Caco-2 (cell line): ENCODE measurements at regions of chr19 and their contacts with region 1.

Region 1: GRCh38 chr19:55632463-55632834 is 8.1 kb upstream of the ZNF784 start:
- DNase-seq: peak; percentile 93
- H3K4me3 ChIP-seq: no peak overlapping the region
- H3K4me3 Mint-ChIP-seq: peak overlapping the region; percentile 30
- H3K27ac Mint-ChIP-seq: peak overlapping the region; percentile 3
- H3K4me1 ChIP-seq: peaks cover 7% of the 10 kb centered on the region
- H3K4me1 Mint-ChIP-seq: peaks cover 30% of the 10 kb centered on the region
- H3K27me3 ChIP-seq: no peaks in the 10 kb centered on the region
- H3K27me3 Mint-ChIP-seq: no peaks in the 10 kb centered on the region
- CTCF ChIP-seq: peak; percentile 88

Region 2: GRCh38 chr19:55146078-55146704 is 486.3 kb before region 1 on chr19:
- CTCF ChIA-PET with region 1: interaction called, 3 read pairs
- POLR2A ChIA-PET with region 1: no interaction called
- intact Hi-C with region 1: loop called (anchors 2 kb)
- DNase-seq: peak; percentile 69 to 73
- H3K4me3 ChIP-seq: peak overlapping the region; percentile 43
- H3K4me3 Mint-ChIP-seq: peak overlapping the region; percentile 66
- H3K27ac Mint-ChIP-seq: no peak overlapping the region
- H3K4me1 ChIP-seq: peaks cover 12% of the 10 kb centered on the region; the same call in 1 of the 2 replicates
- H3K4me1 Mint-ChIP-seq: peaks cover 20% of the 10 kb centered on the region
- H3K27me3 ChIP-seq: no peaks in the 10 kb centered on the region
- H3K27me3 Mint-ChIP-seq: peaks cover 8% of the 10 kb centered on the region
- CTCF ChIP-seq: peak; percentile 79 to 94

Region 3: DNA sequence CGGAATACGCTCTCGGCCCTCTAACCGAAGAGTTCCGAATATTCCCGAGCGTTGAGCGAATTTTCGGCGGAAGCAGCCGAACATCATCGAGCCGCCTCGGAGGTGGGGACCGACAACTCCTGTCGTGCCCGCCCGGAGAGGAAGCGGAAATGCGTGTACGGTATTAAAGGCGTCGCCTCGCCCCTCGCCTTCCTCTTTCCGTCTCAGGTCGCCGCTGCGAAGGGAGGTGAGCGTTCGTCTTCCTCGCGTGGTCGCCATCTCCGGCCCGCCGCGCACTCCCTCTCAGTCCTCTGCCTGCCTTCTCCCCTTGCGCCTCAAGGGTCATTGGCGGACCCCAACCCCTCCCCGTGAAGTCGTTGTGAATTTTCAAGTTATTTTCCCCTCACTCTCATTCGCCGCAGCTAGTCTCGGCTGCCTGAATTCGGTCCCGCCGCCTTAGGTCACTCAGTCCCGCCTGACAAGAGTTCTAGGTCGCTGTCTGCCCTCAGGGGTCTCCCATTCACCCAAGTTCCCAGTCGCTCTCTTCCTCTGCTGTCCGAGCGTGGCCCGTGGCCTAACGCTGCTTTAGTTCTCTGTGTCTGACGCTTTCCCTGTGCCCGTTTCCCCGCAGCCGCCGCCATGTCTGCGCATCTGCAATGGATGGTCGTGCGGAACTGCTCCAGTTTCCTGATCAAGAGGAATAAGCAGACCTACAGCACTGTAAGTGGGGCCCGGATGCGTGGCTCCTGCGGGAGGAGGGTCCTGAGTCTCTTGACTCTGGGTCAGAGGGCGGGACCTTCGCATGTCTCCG is 246.5 kb before region 1 on chr19 and contains the start of gene RPL28:
- CTCF ChIA-PET with region 1: no interaction called
- POLR2A ChIA-PET with region 1: no interaction called
- intact Hi-C with region 1: loop called (anchors 10 kb)
- DNase-seq: peak; percentile 98 to 99
- H3K4me3 ChIP-seq: peak within 1 kb of the TSS; percentile 95
- H3K4me3 Mint-ChIP-seq: peak within 1 kb of the TSS; percentile 93
- H3K27ac Mint-ChIP-seq: peak within 1 kb of the TSS; percentile 89
- H3K4me1 ChIP-seq: peaks cover 30% of the 10 kb centered on the region
- H3K4me1 Mint-ChIP-seq: peaks cover 18% of the 10 kb centered on the region
- H3K27me3 ChIP-seq: no peaks in the 10 kb centered on the region
- H3K27me3 Mint-ChIP-seq: no peaks in the 10 kb centered on the region
- CTCF ChIP-seq: no peak
- total RNA-seq, gene RPL28: 2,048 and 2,146 TPM in 2 replicates

Region 4: DNA sequence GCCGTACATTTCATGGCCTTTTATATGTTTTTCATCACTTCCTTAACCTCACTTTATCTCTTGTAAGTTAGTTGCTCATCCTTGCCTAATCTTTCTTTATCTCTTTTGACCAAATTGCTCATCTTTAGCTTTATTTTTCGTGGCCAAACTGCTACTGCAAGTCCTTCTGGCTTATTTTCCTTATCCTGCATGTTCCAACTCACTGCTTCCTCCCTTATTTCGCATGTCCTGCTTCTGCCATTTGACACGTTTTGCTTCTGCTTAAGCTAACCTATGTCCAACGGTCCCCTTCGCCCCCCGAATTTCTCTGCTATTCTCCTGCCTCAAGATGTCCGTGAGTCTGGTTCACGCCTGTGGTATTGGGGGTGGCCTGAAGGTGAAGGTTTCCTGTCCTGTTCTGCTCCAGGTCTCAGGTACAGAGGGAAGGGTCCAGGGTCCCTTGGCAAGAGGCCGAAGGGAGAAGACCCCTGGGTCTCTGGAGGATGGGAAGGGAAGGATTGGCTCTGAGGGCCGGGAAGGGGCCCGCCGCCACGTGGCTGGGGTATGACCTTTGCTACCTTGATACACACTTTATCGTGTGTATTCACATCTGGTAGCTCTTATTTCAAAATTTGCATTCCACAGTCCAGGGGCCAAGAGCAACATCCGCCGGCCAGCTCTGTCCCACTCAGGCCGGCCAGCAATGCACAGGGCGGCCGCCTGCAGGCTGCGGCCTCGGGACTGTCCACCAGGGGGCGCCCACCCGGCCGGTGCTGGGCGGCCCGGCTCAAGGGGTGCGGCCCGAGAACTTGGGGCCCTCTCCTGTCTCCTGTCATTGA is 165.0 kb before region 1 on chr19:
- CTCF ChIA-PET with region 1: interaction called, 12 read pairs
- POLR2A ChIA-PET with region 1: no interaction called
- intact Hi-C with region 1: loop called (anchors 1 kb)
- DNase-seq: peak in 1 of 2 experiments; percentile 83
- H3K4me3 ChIP-seq: no peak overlapping the region
- H3K4me3 Mint-ChIP-seq: no peak overlapping the region
- H3K27ac Mint-ChIP-seq: no peak overlapping the region
- H3K4me1 ChIP-seq: no peaks in the 10 kb centered on the region
- H3K4me1 Mint-ChIP-seq: peaks cover 11% of the 10 kb centered on the region
- H3K27me3 ChIP-seq: no peaks in the 10 kb centered on the region
- H3K27me3 Mint-ChIP-seq: peaks cover 7% of the 10 kb centered on the region
- CTCF ChIP-seq: peak; percentile 82 to 97

Region 5: GRCh38 chr19:55516878-55517620 is 115.4 kb before region 1 on chr19:
- CTCF ChIA-PET with region 1: interaction called, 9 read pairs
- POLR2A ChIA-PET with region 1: interaction called, 3 read pairs
- intact Hi-C with region 1: loop called (anchors 1 kb)
- DNase-seq: peak; percentile 94 to 97
- H3K4me3 ChIP-seq: peak overlapping the region; percentile 31
- H3K4me3 Mint-ChIP-seq: peak overlapping the region; percentile 72
- H3K27ac Mint-ChIP-seq: peak overlapping the region; percentile 77
- H3K4me1 ChIP-seq: peaks cover 8% of the 10 kb centered on the region
- H3K4me1 Mint-ChIP-seq: no peaks in the 10 kb centered on the region
- H3K27me3 ChIP-seq: no peaks in the 10 kb centered on the region
- H3K27me3 Mint-ChIP-seq: peaks cover 5% of the 10 kb centered on the region
- CTCF ChIP-seq: peak; percentile 89 to 98

Region 6: GRCh38 chr19:55605207-55605636 is 27.2 kb before region 1 on chr19:
- CTCF ChIA-PET with region 1: interaction called, 8 read pairs
- POLR2A ChIA-PET with region 1: no interaction called
- intact Hi-C with region 1: loop called (anchors 1 kb)
- DNase-seq: peak; percentile 99
- H3K4me3 ChIP-seq: peak overlapping the region; percentile 87
- H3K4me3 Mint-ChIP-seq: peak overlapping the region; percentile 86
- H3K27ac Mint-ChIP-seq: peak overlapping the region; percentile 80
- H3K4me1 ChIP-seq: peaks cover 6% of the 10 kb centered on the region; the same call in 1 of the 2 replicates
- H3K4me1 Mint-ChIP-seq: peaks cover 12% of the 10 kb centered on the region
- H3K27me3 ChIP-seq: no peaks in the 10 kb centered on the region
- H3K27me3 Mint-ChIP-seq: no peaks in the 10 kb centered on the region
- CTCF ChIP-seq: no peak

Region 7: GRCh38 chr19:55615535-55616394 is 16.7 kb before region 1 on chr19:
- CTCF ChIA-PET with region 1: no interaction called
- POLR2A ChIA-PET with region 1: no interaction called
- intact Hi-C with region 1: no loop called
- DNase-seq: no peak
- H3K4me3 ChIP-seq: no peak overlapping the region
- H3K4me3 Mint-ChIP-seq: no peak overlapping the region
- H3K27ac Mint-ChIP-seq: no peak overlapping the region
- H3K4me1 ChIP-seq: no peaks in the 10 kb centered on the region
- H3K4me1 Mint-ChIP-seq: no peaks in the 10 kb centered on the region
- H3K27me3 ChIP-seq: no peaks in the 10 kb centered on the region
- H3K27me3 Mint-ChIP-seq: no peaks in the 10 kb centered on the region
- CTCF ChIP-seq: no peak

Region 8: DNA sequence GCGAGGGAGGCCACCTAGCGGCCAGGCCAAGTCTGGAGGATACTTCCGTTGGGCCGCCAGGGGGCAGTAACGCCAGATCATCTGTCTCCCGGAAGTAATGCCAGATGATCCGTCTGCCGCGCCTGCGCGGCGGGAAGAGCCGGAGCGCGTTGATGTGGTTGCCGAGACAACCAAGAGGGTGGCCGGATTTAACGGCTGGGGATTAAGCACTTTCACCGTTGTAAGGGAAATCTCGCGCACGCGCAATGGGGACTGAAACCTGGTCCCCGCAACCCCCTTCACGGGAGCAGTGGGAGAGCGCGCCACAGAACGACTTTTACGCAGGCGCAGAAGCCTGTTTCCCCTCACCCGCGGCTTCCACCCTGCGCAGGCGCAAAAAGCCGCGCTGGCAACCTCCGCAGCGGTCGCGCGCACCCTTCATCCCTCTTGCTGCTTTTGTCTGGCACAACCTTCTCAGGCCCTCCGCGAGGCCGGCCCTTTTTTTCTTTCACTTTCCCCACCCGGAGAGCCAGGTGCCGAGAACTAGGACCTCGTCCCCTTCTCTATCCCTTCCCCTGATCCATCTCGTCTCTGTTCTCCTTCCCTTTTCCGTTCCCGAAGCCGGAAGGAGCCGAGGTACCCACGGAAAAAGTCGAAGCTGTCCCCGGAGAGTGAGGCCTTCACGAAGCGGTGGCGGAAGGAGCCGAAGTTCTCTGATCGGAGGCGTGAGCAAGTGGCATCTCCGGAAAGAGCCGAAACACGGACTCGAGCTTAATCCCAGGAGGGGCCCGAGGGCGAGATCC is 21.5 kb after region 1 on chr19:
- CTCF ChIA-PET with region 1: interaction called, 14 read pairs
- POLR2A ChIA-PET with region 1: interaction called, 12 read pairs
- intact Hi-C with region 1: no loop called
- DNase-seq: peak; percentile 99 to 100
- H3K4me3 ChIP-seq: peak overlapping the region; percentile 87
- H3K4me3 Mint-ChIP-seq: peak overlapping the region; percentile 98
- H3K27ac Mint-ChIP-seq: peak overlapping the region; percentile 98
- H3K4me1 ChIP-seq: peaks cover 6% of the 10 kb centered on the region; the same call in 1 of the 2 replicates
- H3K4me1 Mint-ChIP-seq: peaks cover 8% of the 10 kb centered on the region
- H3K27me3 ChIP-seq: no peaks in the 10 kb centered on the region
- H3K27me3 Mint-ChIP-seq: no peaks in the 10 kb centered on the region
- CTCF ChIP-seq: peak; percentile 100